Activated T-helper 2 cell treated with anti-CD3 and anti-CD28 coated beads, Interferon-gamma antibody, Interleukin-2, Interleukin-4, amounts not matched to agents 10 μg/mL and 5 μg/mL and 100 μg/mL, durations not matched to agents 14 hours and 24 hours and 36 hours (primary cell): ENCODE measurements at regions of chr2 and their contacts with region 1.

Region 1: GRCh38 chr2:164538240-164538866 is 82.9 kb downstream of the GRB14 start:
- DNase-seq: no peak
- H3K4me3 Mint-ChIP-seq: no peak overlapping the region
- H3K27ac Mint-ChIP-seq: no peak overlapping the region
- H3K4me1 Mint-ChIP-seq: peaks cover 2% of the 10 kb centered on the region
- H3K27me3 Mint-ChIP-seq: no peaks in the 10 kb centered on the region

Region 2: GRCh38 chr2:164523009-164523408 is 15.3 kb before region 1 on chr2:
- intact Hi-C with region 1: loop called (anchors 1 kb)
- DNase-seq: no peak
- H3K4me3 Mint-ChIP-seq: no peak overlapping the region
- H3K27ac Mint-ChIP-seq: no peak overlapping the region
- H3K4me1 Mint-ChIP-seq: no peaks in the 10 kb centered on the region
- H3K27me3 Mint-ChIP-seq: no peaks in the 10 kb centered on the region